ENCODE measurements at regions of chr12 and their contacts with region 1.

Region 1: GRCh38 chr12:43069768-43070221 is 480.2 kb upstream of the PRICKLE1 start:
- DNase-seq: no peak
- ATAC-seq: no peak
- H3K4me3 ChIP-seq: no peak overlapping the region
- H3K27ac ChIP-seq: no peak overlapping the region
- H3K4me1 ChIP-seq: no peaks in the 10 kb centered on the region
- H3K27me3 ChIP-seq: no peaks in the 10 kb centered on the region
- CTCF ChIP-seq: no peak
- EP300 ChIP-seq: no peak
- POLR2A ChIP-seq: no peak
- RAD21 ChIP-seq: no peak

Region 2: DNA sequence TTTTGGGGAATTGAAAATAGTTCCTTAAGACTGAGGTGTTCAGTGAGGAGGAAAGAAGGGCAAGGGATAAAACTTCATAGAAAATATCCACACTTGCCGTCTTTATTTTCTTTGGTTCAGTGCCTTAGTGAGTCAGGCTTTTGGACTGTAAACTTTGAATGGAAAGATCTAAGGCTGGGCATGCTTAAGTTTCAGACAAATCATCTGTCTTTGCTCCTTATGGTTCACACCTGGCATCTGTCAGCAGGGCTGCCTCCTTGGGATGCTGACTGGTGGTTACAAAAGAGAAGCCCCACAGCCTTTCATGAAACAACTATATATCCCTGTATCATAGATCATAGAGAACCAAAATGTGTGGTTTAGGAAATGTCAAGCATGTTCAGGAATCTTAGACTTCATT is 344.0 kb before region 1 on chr12:
- CTCF ChIA-PET with region 1: no interaction called
- POLR2A ChIA-PET with region 1: no interaction called
- in situ Hi-C with region 1: no loop called
- intact Hi-C with region 1: no loop called
- DNase-seq: no peak
- ATAC-seq: no peak
- H3K4me3 ChIP-seq: no peak overlapping the region
- H3K27ac ChIP-seq: no peak overlapping the region
- H3K4me1 ChIP-seq: no peaks in the 10 kb centered on the region
- H3K27me3 ChIP-seq: no peaks in the 10 kb centered on the region
- CTCF ChIP-seq: no peak
- EP300 ChIP-seq: no peak
- POLR2A ChIP-seq: no peak
- RAD21 ChIP-seq: no peak

Region 3: DNA sequence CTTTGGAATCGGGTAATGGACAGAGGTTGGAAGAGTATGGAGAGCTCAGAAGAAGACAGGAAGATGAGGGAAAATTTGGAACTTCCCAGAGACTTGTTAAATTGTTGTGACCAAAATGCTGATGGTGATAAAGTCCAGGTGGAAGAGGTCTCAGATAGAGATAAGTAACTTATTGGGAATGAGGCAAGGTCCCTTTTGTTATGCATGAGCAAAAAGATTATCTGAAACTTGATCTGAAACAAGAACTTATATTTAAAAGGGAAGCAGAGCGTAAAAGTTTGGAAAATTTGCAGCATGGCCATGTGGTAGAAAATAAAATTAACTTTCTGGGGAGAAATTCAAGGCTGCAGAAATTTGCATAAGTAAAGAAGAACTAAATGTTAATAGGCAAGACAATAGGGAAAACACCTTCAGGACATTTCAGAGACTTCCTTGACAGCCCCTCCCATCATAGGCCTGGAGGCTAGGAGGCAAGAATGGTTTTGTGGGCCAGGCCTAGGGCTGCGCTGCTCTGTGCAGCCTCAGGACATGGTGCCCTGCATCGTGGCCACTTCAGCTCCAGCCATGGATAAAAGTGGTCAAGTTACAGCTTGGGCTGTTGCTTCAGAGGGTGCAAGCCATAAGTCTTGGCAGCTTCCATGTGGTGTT is 54.6 kb before region 1 on chr12:
- CTCF ChIA-PET with region 1: no interaction called
- POLR2A ChIA-PET with region 1: no interaction called
- in situ Hi-C with region 1: no loop called
- intact Hi-C with region 1: no loop called
- DNase-seq: no peak
- ATAC-seq: no peak
- H3K4me3 ChIP-seq: no peak overlapping the region
- H3K27ac ChIP-seq: no peak overlapping the region
- H3K4me1 ChIP-seq: no peaks in the 10 kb centered on the region
- H3K27me3 ChIP-seq: no peaks in the 10 kb centered on the region
- CTCF ChIP-seq: no peak
- EP300 ChIP-seq: no peak
- POLR2A ChIP-seq: no peak
- RAD21 ChIP-seq: no peak

Region 4: DNA sequence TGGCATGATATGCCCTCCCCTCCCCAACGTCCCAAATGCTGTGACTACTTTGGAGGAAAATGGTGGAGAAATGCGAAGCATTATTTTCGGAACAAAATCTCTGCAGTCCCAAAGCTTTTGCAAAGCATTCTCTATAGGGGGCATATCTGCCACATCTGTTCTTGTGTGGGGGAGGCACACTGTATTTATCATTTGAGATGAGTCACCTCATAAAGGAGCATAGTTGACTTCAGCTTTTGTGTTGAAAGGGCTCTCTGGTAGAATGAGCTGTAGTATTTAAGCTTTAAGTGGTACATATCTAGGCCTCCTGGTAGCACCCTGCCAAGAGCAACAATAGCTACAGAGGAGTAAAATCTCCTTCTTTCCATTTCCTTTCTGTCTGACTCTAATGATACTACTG is 34.7 kb after region 1 on chr12:
- CTCF ChIA-PET with region 1: no interaction called
- POLR2A ChIA-PET with region 1: no interaction called
- in situ Hi-C with region 1: no loop called
- intact Hi-C with region 1: no loop called
- DNase-seq: no peak
- ATAC-seq: no peak
- H3K4me3 ChIP-seq: no peak overlapping the region
- H3K27ac ChIP-seq: no peak overlapping the region
- H3K4me1 ChIP-seq: no peaks in the 10 kb centered on the region
- H3K27me3 ChIP-seq: no peaks in the 10 kb centered on the region
- CTCF ChIP-seq: no peak
- EP300 ChIP-seq: no peak
- POLR2A ChIP-seq: no peak
- RAD21 ChIP-seq: no peak

Region 5: GRCh38 chr12:43127886-43128549 is 58.2 kb after region 1 on chr12:
- CTCF ChIA-PET with region 1: no interaction called
- POLR2A ChIA-PET with region 1: no interaction called
- in situ Hi-C with region 1: no loop called
- intact Hi-C with region 1: loop called (anchors 10 kb)
- DNase-seq: no peak
- ATAC-seq: no peak
- H3K4me3 ChIP-seq: no peak overlapping the region
- H3K27ac ChIP-seq: no peak overlapping the region
- H3K4me1 ChIP-seq: no peaks in the 10 kb centered on the region
- H3K27me3 ChIP-seq: no peaks in the 10 kb centered on the region
- CTCF ChIP-seq: no peak
- EP300 ChIP-seq: no peak
- POLR2A ChIP-seq: no peak
- RAD21 ChIP-seq: no peak

Region 6: DNA sequence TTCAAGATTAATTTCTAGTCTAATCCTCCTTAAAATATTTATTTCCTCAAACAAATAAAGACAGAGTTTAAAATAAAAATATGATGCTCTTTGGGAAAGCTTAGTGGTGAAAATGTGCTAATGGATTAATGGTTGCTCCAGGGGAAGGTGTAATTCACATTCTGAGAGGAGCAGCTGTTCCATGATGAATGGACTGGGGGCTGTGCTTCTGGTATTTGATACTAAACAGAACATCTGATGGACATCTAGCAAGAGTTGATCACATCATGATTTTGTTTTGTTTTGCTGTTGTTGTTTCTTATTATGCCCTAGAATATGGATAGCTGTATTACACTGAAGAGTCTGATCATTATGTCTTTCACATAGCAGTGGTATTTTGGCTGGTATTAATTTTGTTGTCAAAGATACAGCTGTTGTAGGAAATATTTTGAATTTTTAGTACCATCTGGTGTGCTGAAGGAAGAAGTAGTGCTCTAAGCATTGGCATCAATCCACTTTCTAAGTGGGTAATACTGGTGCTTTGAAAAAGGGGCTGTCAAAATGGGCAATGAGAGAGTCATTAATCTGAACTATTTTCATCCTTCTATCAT is 185.8 kb after region 1 on chr12:
- CTCF ChIA-PET with region 1: no interaction called
- POLR2A ChIA-PET with region 1: no interaction called
- in situ Hi-C with region 1: no loop called
- intact Hi-C with region 1: no loop called
- DNase-seq: no peak
- ATAC-seq: no peak
- H3K4me3 ChIP-seq: no peak overlapping the region
- H3K27ac ChIP-seq: no peak overlapping the region
- H3K4me1 ChIP-seq: no peaks in the 10 kb centered on the region
- H3K27me3 ChIP-seq: no peaks in the 10 kb centered on the region
- CTCF ChIP-seq: no peak
- EP300 ChIP-seq: no peak
- POLR2A ChIP-seq: no peak
- RAD21 ChIP-seq: no peak

Measured in HepG2 (cell line).